Breast epithelium (tissue), 4 donors: ENCODE measurements at regions of chr6 and their contacts with region 1.

Region 1: DNA sequence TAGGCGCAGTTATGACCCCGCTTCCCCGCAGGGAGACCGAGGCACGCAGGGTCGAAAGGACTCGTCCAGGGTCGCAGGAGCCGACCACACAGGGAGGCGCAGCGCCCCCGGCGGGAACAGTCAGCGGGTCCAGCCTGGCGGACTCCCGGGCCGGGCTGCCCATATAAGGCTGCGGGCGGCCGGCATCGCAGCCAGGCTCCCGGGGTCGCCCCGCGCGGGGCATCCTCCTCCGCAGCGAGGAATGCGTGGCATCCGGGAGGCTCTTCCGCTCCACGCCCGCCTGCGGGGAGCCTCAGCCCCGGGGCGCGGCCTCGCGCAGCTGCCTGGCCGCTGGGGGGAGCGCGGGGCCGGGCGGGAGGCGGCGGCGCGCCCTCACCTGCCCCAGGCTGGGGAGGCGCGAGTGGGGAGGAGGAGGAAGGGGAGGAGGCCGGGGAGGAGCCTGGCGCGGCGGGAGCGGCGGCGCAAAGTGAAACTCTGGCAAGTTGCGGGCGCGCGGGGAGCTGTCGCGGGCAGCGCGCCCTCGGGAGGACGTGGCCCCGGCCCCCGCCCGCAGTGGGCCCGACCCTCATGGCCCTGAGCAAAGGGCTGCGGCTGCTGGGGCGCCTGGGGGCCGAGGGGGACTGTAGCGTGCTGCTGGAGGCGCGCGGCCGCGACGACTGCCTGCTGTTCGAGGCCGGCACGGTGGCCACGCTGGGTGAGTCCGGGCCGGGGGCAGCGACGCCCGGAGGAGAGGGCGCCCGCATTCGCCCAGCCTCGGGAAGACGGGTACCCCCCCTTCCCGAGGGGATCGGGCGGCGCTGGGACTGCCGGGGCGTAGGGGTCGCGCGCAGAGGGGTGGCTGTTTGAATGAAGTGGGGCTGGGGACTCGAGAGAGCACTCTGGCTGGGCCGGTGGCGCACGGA is at the start of gene SYNJ2:
- DNase-seq: peak; percentile 63 to 82
- H3K4me3 ChIP-seq: peak within 1 kb of the TSS; percentile 86 to 97 (median 89)
- H3K27ac ChIP-seq: peak within 1 kb of the TSS; percentile 79 to 86
- H3K4me1 ChIP-seq: peaks cover 0 to 5% of the 10 kb centered on the region in 2 donors
- H3K27me3 ChIP-seq: no peaks in the 10 kb centered on the region
- CTCF ChIP-seq: peak in 1 of 3 donors; percentile 27
- POLR2A ChIP-seq: no peak
- total RNA-seq, gene SYNJ2: 3.0 to 20.2 (median 15.7) TPM

Region 2: DNA sequence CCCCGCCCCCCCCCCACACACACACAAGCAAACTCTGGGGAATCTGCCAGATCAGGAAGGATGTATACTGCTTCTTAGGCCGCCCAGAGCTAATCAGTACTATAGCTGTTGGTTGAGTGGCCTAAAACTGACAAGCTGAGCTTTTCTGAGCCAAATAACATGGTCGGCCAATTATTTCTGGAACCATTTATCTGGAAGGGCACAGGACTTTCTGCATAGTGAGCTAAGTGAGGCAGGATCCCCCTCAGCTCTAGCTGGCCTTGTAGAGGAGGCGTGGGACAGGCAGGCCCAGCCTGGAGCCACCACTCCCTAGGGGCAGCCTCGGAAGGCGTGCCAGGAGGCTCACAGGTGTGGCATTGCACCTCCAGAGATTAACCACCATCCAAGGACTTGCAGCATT is 858.4 kb before region 1 on chr6:
- intact Hi-C with region 1: no loop called
- DNase-seq: no peak
- H3K4me3 ChIP-seq: no peak overlapping the region
- H3K27ac ChIP-seq: no peak overlapping the region
- H3K4me1 ChIP-seq: no peaks in the 10 kb centered on the region
- H3K27me3 ChIP-seq: no peaks in the 10 kb centered on the region
- CTCF ChIP-seq: no peak
- POLR2A ChIP-seq: no peak

Region 3: GRCh38 chr6:157995458-157995857 is 13.8 kb after region 1 on chr6:
- intact Hi-C with region 1: loop called (anchors 1 kb)
- DNase-seq: no peak
- H3K4me3 ChIP-seq: no peak overlapping the region
- H3K27ac ChIP-seq: no peak overlapping the region
- H3K4me1 ChIP-seq: peaks cover 0 to 6% of the 10 kb centered on the region in 2 donors
- H3K27me3 ChIP-seq: no peaks in the 10 kb centered on the region
- CTCF ChIP-seq: no peak
- POLR2A ChIP-seq: no peak

Region 4: DNA sequence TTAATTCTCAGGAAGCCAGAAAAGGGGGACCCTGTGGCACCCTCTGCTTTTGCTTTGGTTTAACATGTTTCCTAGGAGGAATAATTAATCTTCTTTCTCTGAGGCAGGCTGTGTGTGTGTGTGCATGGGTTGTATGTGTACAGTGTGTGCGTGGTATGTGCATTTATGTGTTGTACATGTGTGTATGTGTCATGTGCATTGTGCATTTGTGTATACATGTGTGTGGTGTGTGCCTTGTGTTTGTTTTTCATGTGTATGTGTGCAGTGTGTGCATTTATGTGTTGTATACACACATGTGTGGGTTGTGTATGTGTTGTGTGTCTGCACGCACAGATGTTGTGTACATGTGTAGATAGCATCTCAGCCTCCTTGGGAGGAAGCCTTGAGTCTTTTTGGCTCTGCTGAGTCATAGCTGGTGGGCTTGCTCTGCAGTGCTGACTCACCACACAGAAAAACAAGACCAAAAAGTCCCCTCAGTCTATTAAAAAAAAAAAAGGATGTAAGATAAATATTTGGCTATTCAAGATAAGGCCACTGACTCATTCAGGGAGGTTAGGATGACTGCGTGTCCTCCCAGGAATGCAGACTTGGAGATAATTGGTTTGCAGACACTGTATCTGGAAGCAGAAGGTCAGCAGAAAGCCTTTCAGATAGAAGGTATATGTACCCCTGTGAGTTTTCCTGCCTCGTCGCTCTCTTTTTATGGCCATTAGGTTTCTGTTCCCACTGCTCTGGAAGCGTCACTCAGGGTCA is 58.6 kb after region 1 on chr6:
- intact Hi-C with region 1: loop called (anchors 5 kb)
- DNase-seq: no peak
- H3K4me3 ChIP-seq: no peak overlapping the region
- H3K27ac ChIP-seq: peak overlapping the region; percentile 51 to 81
- H3K4me1 ChIP-seq: peaks cover 0 to 6% of the 10 kb centered on the region in 2 donors
- H3K27me3 ChIP-seq: no peaks in the 10 kb centered on the region
- CTCF ChIP-seq: no peak
- POLR2A ChIP-seq: no peak

Region 5: GRCh38 chr6:158060455-158061360 is 79.1 kb after region 1 on chr6:
- intact Hi-C with region 1: no loop called
- DNase-seq: peak; percentile 90 to 91
- H3K4me3 ChIP-seq: peak overlapping the region; percentile 8 to 56 (median 26)
- H3K27ac ChIP-seq: peak overlapping the region; percentile 96 to 98
- H3K4me1 ChIP-seq: peaks cover 11 to 16% of the 10 kb centered on the region in 2 donors
- H3K27me3 ChIP-seq: no peaks in the 10 kb centered on the region
- CTCF ChIP-seq: no peak
- POLR2A ChIP-seq: no peak